ENCODE measurements at regions of chr1 and their contacts with region 1.

Region 1: DNA sequence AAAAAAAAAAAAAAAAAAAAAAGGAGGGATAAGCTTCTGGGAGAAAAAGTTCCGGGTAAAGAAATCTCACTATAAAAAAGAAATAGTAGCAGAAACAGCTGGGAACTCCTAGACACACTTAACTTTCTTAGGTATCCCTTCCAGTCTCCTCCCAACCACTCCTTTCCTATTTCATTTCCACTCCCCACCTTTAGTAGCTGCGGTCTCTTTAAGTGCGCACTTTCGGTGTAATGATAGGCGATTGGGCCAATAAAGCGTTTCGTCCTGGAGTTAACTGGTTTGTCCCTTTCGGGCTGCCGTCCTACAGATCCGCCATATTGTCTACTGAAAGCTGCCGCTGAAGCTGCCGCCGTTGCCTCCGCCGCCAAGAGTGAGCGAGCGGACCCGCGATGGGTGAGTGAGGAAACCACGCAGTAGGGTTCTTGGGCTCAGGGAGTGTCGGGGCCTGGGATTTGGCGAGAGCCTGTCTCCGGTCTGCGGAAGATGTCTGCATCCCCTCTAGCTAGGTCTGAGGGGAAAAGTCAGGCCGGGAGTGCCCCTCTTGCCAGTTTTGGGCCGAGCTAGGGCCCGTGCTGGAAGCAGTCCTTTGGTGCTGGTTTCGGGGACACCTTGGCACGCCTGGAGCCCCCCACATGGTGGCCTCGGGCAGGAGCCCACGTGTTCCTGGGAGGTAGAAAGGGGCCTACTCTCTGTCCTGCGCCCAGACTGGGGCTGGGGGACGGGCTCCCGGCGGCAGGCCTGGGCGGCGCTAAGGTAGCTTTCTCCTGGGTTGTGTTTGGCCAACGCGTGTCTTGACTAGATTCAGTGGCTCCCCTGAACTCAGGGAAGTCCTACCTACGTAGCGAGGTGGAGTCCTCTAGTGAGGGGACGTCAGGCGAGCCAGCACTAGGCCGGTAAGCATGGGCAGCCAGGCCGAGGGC is at the start of gene KPNA6:
- DNase-seq: peak; percentile 81 to 98 (median 82)
- ATAC-seq: peak; percentile 80
- H3K4me3 ChIP-seq: peak within 1 kb of the TSS; percentile 72
- H3K27ac ChIP-seq: peak within 1 kb of the TSS; percentile 83
- H3K4me1 ChIP-seq: peaks cover 28 to 33% of the 10 kb centered on the region in 2 experiments; a peak in 4 of 5 replicates
- H3K27me3 ChIP-seq: no peaks in the 10 kb centered on the region
- CTCF ChIP-seq: no peak
- EP300 ChIP-seq: peak; percentile 44; the same call in 1 of the 2 replicates
- POLR2A ChIP-seq: peak; percentile 84
- RAD21 ChIP-seq: no peak
- polyA plus RNA-seq, gene KPNA6: 24.8 to 32.2 TPM

Region 2: GRCh38 chr1:32072622-32073298 is 35.2 kb before region 1 on chr1 and contains the start of gene TMEM39B:
- CTCF ChIA-PET with region 1: no interaction called
- POLR2A ChIA-PET with region 1: interaction called, 8 read pairs
- in situ Hi-C with region 1: no loop called
- intact Hi-C with region 1: loop called (anchors 2 kb)
- DNase-seq: peak; percentile 98 to 99 (median 99)
- ATAC-seq: peak; percentile 93
- H3K4me3 ChIP-seq: peak within 1 kb of the TSS; percentile 83
- H3K27ac ChIP-seq: peak within 1 kb of the TSS; percentile 79
- H3K4me1 ChIP-seq: peaks cover 17 to 20% of the 10 kb centered on the region in 2 experiments
- H3K27me3 ChIP-seq: no peaks in the 10 kb centered on the region
- CTCF ChIP-seq: 0 out of 6 replicates have a peak, but pooled peaks of 2 of the 3 experiments have one; percentile 1 to 9
- EP300 ChIP-seq: no peak; the same call in 1 of the 2 replicates
- POLR2A ChIP-seq: peak; percentile 98
- RAD21 ChIP-seq: no peak; a peak in 1 of 4 replicates
- polyA plus RNA-seq, gene TMEM39B: 0.92 to 3.5 TPM

Region 3: DNA sequence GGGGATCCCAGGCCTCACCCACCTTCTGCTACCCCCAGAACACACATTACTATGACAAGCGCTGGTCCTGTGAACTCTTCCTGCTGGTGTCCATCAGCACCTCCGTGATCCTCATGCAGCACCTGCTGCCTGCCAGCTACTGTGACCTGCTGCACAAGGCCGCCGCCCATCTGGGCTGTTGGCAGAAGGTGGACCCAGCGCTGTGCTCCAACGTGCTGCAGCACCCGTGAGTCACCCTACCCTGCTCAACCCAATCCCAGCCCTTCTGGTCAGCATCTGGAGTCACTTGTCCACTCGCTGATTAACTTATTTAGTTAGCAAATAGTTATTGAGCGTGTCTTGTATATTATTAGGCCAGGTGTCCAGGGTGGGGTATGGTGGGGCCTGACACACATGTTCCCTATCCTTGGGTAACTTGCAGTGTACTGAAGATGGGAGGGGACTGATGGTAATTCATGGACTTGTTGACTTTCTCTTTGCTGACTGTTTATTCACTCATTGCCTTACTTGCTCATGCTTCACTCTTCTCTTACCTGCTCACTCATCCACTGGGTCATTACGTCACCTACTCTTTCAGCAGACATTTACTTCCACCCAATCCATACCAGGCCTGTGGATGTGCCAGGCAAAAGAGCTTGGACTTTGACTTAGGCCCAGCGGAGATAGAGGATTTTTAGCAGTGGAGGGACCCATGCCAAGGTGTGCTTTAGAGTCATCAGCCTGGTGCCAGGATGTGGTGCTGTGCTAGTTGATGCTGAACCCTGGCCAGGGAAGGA is 13.1 kb before region 1 on chr1:
- CTCF ChIA-PET with region 1: no interaction called
- POLR2A ChIA-PET with region 1: interaction called, 10 read pairs
- in situ Hi-C with region 1: no loop called
- intact Hi-C with region 1: no loop called
- DNase-seq: no peak
- ATAC-seq: no peak
- H3K4me3 ChIP-seq: no peak overlapping the region
- H3K27ac ChIP-seq: no peak overlapping the region
- H3K4me1 ChIP-seq: 0 out of 5 replicates have a peak, but pooled peaks cover 0 to 2% of the 10 kb centered on the region in 2 experiments
- H3K27me3 ChIP-seq: no peaks in the 10 kb centered on the region
- CTCF ChIP-seq: no peak
- EP300 ChIP-seq: no peak
- POLR2A ChIP-seq: no peak
- RAD21 ChIP-seq: no peak

Region 4: GRCh38 chr1:32127409-32128198 is 19.6 kb after region 1 on chr1:
- CTCF ChIA-PET with region 1: no interaction called
- POLR2A ChIA-PET with region 1: interaction called, 209 read pairs
- in situ Hi-C with region 1: no loop called
- intact Hi-C with region 1: no loop called
- DNase-seq: peak; percentile 44 to 73 (median 50)
- ATAC-seq: peak; percentile 52
- H3K4me3 ChIP-seq: no peak overlapping the region
- H3K27ac ChIP-seq: peak overlapping the region; percentile 74
- H3K4me1 ChIP-seq: peaks cover 42 to 61% of the 10 kb centered on the region in 2 experiments
- H3K27me3 ChIP-seq: no peaks in the 10 kb centered on the region
- CTCF ChIP-seq: peak in 2 of 3 experiments; percentile 29 to 33; a peak in 2 of 6 replicates
- EP300 ChIP-seq: peak; percentile 92
- POLR2A ChIP-seq: no peak
- RAD21 ChIP-seq: no peak

Region 5: DNA sequence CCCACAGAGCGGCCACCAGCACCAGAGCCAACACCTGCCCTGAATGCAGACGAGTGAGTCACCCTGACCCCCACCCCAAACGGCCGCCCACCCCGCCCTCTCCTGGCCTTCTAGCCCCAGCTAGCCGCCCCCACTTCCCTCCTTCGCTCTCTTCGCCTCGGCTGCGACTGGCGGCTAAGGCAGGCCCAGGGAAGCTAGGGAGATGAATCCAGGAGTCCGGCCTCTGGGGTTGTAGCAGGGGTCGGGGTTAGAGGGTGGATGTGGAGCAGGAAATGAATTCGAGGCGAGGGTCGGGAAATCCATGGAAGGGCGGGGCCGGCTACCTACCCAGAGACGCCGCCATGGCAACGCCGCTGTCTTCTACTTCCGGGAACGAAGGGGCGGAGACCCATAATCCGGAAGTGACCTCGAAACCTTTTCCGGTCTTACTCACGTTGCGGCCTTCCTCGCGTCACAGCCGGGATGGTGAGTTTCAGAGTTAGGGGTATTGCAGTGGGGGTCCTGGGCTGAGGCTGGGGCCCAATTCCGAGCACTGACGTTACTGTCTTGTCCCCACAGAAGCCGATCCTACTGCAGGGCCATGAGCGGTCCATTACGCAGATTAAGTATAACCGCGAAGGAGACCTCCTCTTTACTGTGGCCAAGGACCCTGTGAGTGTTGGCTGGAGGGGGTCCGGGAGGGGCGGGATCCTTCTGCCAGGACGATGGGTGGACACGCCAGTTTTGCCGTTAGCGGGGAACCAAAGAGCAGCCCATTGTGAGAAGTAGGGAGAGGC is 114.2 kb after region 1 on chr1 and contains the starts of genes EIF3I and TMEM234:
- CTCF ChIA-PET with region 1: no interaction called
- POLR2A ChIA-PET with region 1: no interaction called
- in situ Hi-C with region 1: no loop called
- intact Hi-C with region 1: no loop called
- DNase-seq: peak; percentile 93 to 98 (median 96)
- ATAC-seq: peak; percentile 95
- H3K4me3 ChIP-seq: peak within 1 kb of the TSS; percentile 80
- H3K27ac ChIP-seq: peak within 1 kb of the TSS; percentile 90
- H3K4me1 ChIP-seq: peaks cover 19 to 22% of the 10 kb centered on the region in 2 experiments; a peak in 4 of 5 replicates
- H3K27me3 ChIP-seq: no peaks in the 10 kb centered on the region
- CTCF ChIP-seq: no peak
- EP300 ChIP-seq: no peak; the same call in 1 of the 2 replicates
- POLR2A ChIP-seq: peak; percentile 97
- RAD21 ChIP-seq: no peak
- polyA plus RNA-seq, gene EIF3I: 1,337 to 1,526 TPM
- polyA plus RNA-seq, gene TMEM234: 6.2 to 6.8 TPM

Region 6: DNA sequence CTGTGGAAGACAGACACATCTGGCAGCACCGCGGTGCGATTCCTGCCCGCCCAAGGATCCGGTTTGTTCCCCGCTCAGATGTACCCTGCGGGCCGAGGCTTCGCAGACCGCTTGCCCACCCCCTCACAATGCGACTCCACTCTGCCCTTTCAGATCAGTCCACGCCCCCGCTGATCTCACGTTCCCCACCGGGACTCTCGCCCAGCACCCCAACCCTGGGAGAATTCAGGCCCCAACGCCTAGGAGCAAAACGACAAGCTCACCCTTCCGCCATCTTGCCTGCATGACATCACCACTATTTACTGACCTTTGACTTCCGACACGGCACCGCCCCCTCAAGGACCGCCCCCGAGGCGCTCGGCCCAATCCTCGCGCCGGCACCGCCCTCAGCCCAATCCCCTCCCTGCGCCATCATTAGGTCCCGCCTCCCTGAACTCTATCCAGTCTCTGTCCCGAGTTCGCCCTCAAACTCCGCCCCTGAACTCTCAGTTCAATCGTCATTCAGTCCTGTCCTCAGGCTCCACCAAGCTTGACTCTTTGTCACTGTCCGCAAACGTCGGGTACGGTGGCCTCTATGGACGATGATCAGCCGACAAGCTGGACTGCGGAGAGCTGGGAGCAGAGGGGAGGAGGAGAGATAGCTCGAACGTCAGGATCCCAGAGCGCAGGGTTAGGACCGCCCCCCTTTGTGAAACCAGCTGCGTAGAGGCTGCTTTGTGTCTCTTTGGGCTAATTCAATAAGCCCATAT is 286.3 kb after region 1 on chr1 and contains the start of gene BSDC1:
- CTCF ChIA-PET with region 1: no interaction called
- POLR2A ChIA-PET with region 1: no interaction called
- in situ Hi-C with region 1: no loop called
- intact Hi-C with region 1: no loop called
- DNase-seq: peak; percentile 98 to 100 (median 98)
- ATAC-seq: peak; percentile 91
- H3K4me3 ChIP-seq: peak within 1 kb of the TSS; percentile 68
- H3K27ac ChIP-seq: peak within 1 kb of the TSS; percentile 95
- H3K4me1 ChIP-seq: peaks cover 44 to 48% of the 10 kb centered on the region in 2 experiments
- H3K27me3 ChIP-seq: no peaks in the 10 kb centered on the region
- CTCF ChIP-seq: 0 out of 6 replicates have a peak, but pooled peaks of 1 of the 3 experiments have one; percentile 15
- EP300 ChIP-seq: peak; percentile 80
- POLR2A ChIP-seq: peak; percentile 94
- RAD21 ChIP-seq: peak in 1 of 2 experiments; percentile 16; a peak in 1 of 4 replicates
- polyA plus RNA-seq, gene BSDC1: 10.2 to 14.7 TPM

Measured in K562 (cell line).